Naive thymus-derived CD4-positive, alpha-beta T cell (primary cell): ENCODE measurements at regions of chr3 and their contacts with region 1.

Region 1: DNA sequence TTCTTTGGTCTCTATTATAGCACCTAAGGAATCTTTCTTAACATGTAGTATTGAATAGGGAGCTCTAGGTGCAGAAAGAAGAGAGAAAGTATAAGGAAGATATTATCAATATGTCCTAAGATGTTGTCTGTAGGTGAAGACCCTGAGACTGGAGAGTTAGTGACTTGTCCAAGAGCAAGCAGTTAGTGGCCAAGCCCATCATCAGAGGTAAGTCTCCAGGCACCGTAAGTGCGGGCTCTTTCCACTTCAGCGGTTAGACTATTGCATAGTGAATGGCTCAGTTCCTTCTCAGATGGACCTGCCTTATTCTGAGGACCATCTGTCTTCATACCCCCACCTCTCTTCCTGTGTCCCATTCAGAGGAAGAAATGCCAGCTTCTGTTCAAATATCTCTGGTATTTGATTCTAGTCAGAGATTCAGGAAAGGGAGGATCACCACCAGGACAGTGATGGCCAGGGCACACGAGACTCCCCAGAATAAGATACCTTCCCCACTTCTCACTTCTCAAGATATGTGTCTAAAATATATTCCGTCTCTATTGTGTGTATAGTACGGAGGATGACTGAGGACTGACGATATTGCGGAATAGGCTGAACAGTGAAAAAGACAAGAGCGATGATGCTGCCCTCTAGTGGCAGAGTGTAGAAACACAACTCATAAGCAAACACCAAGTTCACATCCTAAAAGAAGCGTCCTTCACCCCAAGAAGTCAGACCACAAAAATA is 19.1 kb upstream of the ADGRG7 start:
- DNase-seq: peak; percentile 24 to 73 (median 61)
- ATAC-seq: peak; percentile 98
- H3K4me3 ChIP-seq: no peak overlapping the region
- H3K4me3 Mint-ChIP-seq: peak overlapping the region in 7 of 10 donors; percentile 13 to 77 (median 60)
- H3K27ac ChIP-seq: no peak overlapping the region
- H3K27ac Mint-ChIP-seq: no peak overlapping the region
- H3K4me1 ChIP-seq: no peaks in the 10 kb centered on the region
- H3K4me1 Mint-ChIP-seq: peaks cover 0 to 8% (median 4%) of the 10 kb centered on the region in 7 donors
- H3K27me3 ChIP-seq: no peaks in the 10 kb centered on the region
- H3K27me3 Mint-ChIP-seq: peaks cover 0 to 12% (median 0%) of the 10 kb centered on the region in 5 donors

Region 2: DNA sequence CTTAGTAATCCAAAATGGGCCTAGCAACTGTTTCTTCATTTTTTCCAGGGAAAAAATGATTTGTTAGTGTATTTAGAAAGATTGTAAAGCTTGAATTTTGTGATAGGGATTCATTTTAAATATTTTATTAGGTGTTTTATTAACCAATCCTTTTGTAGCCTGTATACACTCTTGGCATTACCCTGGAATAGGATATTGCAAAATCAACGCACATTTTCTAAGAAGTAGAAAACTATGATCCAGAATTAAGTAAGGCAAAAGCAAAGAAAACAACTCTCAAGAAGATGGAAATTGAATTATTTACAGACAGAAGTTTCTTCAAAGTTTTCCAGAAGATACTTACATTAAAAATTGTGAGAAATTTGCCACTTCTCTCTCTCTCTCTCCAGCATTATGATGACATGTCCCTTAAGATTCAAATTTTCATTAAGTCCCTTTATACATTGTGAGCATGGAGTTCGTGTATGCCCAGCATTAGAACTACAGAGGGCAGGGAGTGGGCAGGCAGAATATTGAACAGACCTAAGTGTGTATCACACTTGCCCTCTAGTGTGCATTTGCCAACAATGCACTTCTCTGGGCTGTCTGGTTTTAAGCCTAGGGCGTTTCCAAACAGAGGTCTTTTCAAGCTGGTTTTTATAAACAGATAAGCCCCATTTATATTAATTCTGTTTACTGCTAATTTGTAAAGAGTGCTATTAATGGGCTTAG is 801.1 kb before region 1 on chr3:
- CTCF ChIA-PET with region 1: no interaction called
- POLR2A ChIA-PET with region 1: no interaction called
- intact Hi-C with region 1: no loop called
- DNase-seq: peak in 3 of 9 donors; percentile 1 to 10 (median 9)
- ATAC-seq: peak; percentile 76
- H3K4me3 ChIP-seq: no peak overlapping the region
- H3K4me3 Mint-ChIP-seq: no peak overlapping the region
- H3K27ac ChIP-seq: no peak overlapping the region
- H3K27ac Mint-ChIP-seq: no peak overlapping the region
- H3K4me1 ChIP-seq: no peaks in the 10 kb centered on the region
- H3K4me1 Mint-ChIP-seq: peaks cover 0 to 3% (median 0%) of the 10 kb centered on the region in 7 donors
- H3K27me3 ChIP-seq: no peaks in the 10 kb centered on the region
- H3K27me3 Mint-ChIP-seq: peaks cover 0 to 40% (median 8%) of the 10 kb centered on the region in 5 donors

Region 3: DNA sequence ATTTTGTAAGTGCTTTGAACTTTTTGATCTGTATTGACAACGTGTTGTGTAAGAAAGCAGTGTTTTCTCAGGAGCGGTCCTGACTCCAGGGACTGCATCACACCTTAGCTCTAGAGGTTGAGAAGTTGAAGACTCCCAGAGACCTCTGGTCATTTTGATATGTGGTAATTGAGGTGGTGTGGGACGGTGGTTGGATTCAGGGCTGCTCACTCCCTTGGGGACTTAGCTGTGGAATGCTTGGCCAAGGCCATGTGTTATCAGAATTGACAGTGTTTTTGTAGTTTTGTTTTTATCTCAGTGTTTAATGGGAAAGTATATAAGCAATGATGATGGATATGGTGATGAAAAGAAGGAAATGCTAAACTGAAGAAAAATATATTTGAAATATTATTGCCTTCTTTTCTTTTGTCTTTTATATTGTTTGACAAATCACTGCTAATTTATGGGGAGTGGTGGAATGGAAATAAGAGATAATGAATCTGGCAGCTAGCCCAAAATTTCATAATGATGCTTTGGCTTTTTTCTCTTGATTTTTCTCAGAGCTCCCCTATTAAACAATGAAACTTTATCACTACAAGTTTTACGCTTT is 756.6 kb before region 1 on chr3:
- CTCF ChIA-PET with region 1: interaction called, 8 read pairs
- POLR2A ChIA-PET with region 1: no interaction called
- intact Hi-C with region 1: loop called (anchors 1 to 2 kb)
- DNase-seq: no peak
- ATAC-seq: no peak
- H3K4me3 ChIP-seq: no peak overlapping the region
- H3K4me3 Mint-ChIP-seq: no peak overlapping the region
- H3K27ac ChIP-seq: no peak overlapping the region
- H3K27ac Mint-ChIP-seq: no peak overlapping the region
- H3K4me1 ChIP-seq: no peaks in the 10 kb centered on the region
- H3K4me1 Mint-ChIP-seq: peaks cover 0 to 11% (median 4%) of the 10 kb centered on the region in 7 donors
- H3K27me3 ChIP-seq: no peaks in the 10 kb centered on the region
- H3K27me3 Mint-ChIP-seq: no peaks in the 10 kb centered on the region

Region 4: DNA sequence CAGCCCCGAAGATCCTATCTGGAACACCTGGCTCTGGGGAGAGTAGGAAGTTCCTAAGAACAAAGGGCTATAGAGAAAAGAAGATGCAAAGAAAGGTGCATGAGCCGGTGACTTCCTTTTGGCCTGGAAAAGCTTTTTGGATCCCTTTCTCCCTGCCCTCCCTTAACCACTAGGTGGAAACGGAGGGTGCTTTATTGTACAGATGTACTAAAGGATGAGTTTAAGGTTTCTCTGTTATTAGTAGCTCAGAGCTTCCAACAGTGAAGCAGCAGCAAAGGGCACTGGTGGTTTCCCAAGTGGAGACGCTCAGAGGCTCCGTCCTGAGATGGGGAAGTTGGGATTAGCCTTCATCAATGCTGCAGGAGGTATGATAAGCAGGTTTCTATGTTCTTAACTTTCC is 13.2 kb after region 1 on chr3:
- CTCF ChIA-PET with region 1: interaction called, 10 read pairs
- POLR2A ChIA-PET with region 1: no interaction called
- intact Hi-C with region 1: no loop called
- DNase-seq: peak in 1 of 9 donors; percentile 2
- ATAC-seq: peak; percentile 40
- H3K4me3 ChIP-seq: peak overlapping the region; percentile 28
- H3K4me3 Mint-ChIP-seq: peak overlapping the region; percentile 47 to 77 (median 66)
- H3K27ac ChIP-seq: no peak overlapping the region
- H3K27ac Mint-ChIP-seq: peak overlapping the region in 7 of 9 donors; percentile 0 to 89 (median 39)
- H3K4me1 ChIP-seq: peaks cover 0 to 17% of the 10 kb centered on the region in 2 donors
- H3K4me1 Mint-ChIP-seq: peaks cover 19 to 41% (median 32%) of the 10 kb centered on the region in 7 donors
- H3K27me3 ChIP-seq: no peaks in the 10 kb centered on the region
- H3K27me3 Mint-ChIP-seq: peaks cover 0 to 9% (median 0%) of the 10 kb centered on the region in 5 donors